ENCODE measurements at regions of chr4 and their contacts with region 1.

Region 1: GRCh38 chr4:184237612-184238011 is 19.9 kb upstream of the ENPP6 start:
- DNase-seq: no peak
- ATAC-seq: peak; percentile 71
- H3K4me3 ChIP-seq: no peak overlapping the region
- H3K27ac ChIP-seq: no peak overlapping the region
- H3K4me1 ChIP-seq: no peaks in the 10 kb centered on the region
- H3K27me3 ChIP-seq: no peaks in the 10 kb centered on the region
- CTCF ChIP-seq: no peak
- EP300 ChIP-seq: no peak
- POLR2A ChIP-seq: no peak
- RAD21 ChIP-seq: no peak

Region 2: GRCh38 chr4:184955651-184956050 is 718.0 kb after region 1 on chr4:
- CTCF ChIA-PET with region 1: no interaction called
- POLR2A ChIA-PET with region 1: no interaction called
- RAD21 ChIA-PET with region 1: no interaction called
- SMC1A ChIA-PET with region 1: no interaction called
- in situ Hi-C with region 1: no loop called
- intact Hi-C with region 1: loop called (anchors 5 kb)
- DNase-seq: peak; percentile 5
- ATAC-seq: peak; percentile 90
- H3K4me3 ChIP-seq: no peak overlapping the region
- H3K27ac ChIP-seq: no peak overlapping the region
- H3K4me1 ChIP-seq: 0 out of 2 replicates have a peak, but pooled peaks cover 3% of the 10 kb centered on the region
- H3K27me3 ChIP-seq: no peaks in the 10 kb centered on the region; a peak in 1 of 4 replicates
- CTCF ChIP-seq: no peak
- EP300 ChIP-seq: no peak
- POLR2A ChIP-seq: no peak
- RAD21 ChIP-seq: no peak

Measured in GM12878 (cell line).